Ovary (tissue), 10 donors: ENCODE measurements at regions of chr1 and their contacts with region 1.

Region 1: DNA sequence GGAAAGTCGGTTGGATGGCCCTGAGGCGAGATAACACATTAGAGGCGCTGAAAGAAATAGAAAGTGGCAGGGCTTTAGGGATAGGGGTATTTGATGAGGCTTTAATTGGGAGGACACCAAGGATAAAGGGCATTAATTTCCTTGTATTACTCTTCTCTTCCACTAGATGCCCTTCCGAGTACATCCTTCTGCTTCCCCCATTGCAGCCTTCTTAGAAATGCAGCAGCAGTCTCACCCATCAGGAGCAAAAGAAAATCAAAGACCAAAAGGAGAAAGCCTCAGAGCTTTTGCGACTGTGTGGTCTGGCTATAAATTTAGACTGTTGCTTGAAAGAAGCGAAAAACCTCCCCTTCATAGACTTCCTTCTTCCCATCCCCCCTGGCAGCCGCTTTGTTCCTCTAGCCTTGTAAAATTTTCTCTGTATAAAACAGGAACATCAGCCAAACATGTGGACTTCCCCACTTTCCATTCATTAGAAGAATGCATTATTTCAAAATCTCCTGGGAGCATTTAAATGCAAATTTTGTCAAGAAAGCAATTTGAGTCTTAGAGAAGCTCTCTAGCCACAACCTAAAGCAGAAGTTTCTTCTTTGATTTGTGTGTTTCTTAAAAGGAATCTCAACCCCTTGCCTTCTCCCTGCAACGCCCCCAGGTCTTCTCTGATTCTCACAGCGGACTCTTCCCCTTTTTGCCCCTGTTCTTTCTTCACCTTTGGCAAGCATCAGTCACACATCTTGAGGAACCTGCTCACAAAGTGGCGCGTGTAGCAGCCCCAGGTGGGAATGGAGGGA is 76.6 kb downstream of the NDUFS5 start:
- DNase-seq: peak in 2 of 5 donors; percentile 27 to 49
- H3K4me3 ChIP-seq: no peak overlapping the region
- H3K27ac ChIP-seq: no peak overlapping the region
- H3K4me1 ChIP-seq: peaks cover 9% of the 10 kb centered on the region
- H3K27me3 ChIP-seq: no peaks in the 10 kb centered on the region
- CTCF ChIP-seq: peak; percentile 53 to 91 (median 89)
- EP300 ChIP-seq: no peak
- POLR2A ChIP-seq: no peak

Region 2: DNA sequence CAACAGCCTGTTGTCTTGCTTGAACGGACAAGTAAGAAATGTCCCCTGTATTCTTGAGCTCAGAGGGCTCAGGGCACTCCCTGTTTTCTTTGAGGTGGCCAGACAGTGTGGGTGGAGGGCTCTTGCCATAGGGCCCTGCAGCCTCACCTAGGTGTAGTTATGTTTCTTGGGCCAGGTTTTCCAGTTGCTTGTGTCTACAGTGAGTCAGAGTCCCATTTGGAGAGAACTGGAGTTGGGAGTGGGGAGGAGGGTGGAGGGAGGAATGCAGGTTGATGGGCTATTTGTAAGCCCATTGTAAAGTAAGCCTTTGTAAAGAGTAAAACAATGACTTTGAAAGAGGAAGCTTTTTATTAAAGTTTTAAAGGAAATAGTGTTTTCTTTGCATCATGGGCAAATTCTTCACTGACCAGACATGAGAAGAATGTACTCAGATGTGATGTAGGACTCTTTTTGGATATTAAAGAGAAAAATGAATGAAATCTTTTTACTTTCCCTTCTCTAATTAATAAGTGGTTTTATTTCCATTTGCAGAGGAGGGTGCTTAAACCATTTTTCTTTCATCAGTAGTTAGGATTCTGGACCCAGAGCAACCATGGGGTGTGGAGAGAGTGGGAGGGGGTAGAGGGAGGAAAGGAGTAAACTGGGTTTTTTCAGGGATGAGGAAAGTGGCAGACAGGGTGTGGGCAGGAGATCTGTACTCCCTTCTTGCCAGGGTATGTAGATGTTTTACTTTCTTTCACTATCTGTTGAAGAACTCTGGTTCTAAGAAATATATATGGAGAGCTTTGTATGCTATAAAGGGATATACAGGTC is 56.7 kb after region 1 on chr1:
- intact Hi-C with region 1: loop called in 1 of 4 experiments (anchors 10 kb)
- DNase-seq: no peak
- H3K4me3 ChIP-seq: no peak overlapping the region
- H3K27ac ChIP-seq: no peak overlapping the region
- H3K4me1 ChIP-seq: peaks cover 23% of the 10 kb centered on the region
- H3K27me3 ChIP-seq: no peaks in the 10 kb centered on the region
- CTCF ChIP-seq: no peak
- EP300 ChIP-seq: no peak
- POLR2A ChIP-seq: no peak

Region 3: GRCh38 chr1:39196244-39197215 is 93.8 kb after region 1 on chr1:
- intact Hi-C with region 1: loop called (anchors 5 to 10 kb)
- DNase-seq: no peak
- H3K4me3 ChIP-seq: no peak overlapping the region
- H3K27ac ChIP-seq: no peak overlapping the region
- H3K4me1 ChIP-seq: peaks cover 4% of the 10 kb centered on the region
- H3K27me3 ChIP-seq: no peaks in the 10 kb centered on the region
- CTCF ChIP-seq: no peak
- EP300 ChIP-seq: no peak
- POLR2A ChIP-seq: no peak

Region 4: GRCh38 chr1:39258146-39258924 is 155.6 kb after region 1 on chr1:
- intact Hi-C with region 1: loop called (anchors 2 to 5 kb)
- DNase-seq: peak; percentile 65 to 83 (median 73)
- H3K4me3 ChIP-seq: no peak overlapping the region
- H3K27ac ChIP-seq: peak overlapping the region in 1 of 2 donors; percentile 29
- H3K4me1 ChIP-seq: peaks cover 15% of the 10 kb centered on the region
- H3K27me3 ChIP-seq: no peaks in the 10 kb centered on the region
- CTCF ChIP-seq: peak; percentile 49 to 88 (median 82)
- EP300 ChIP-seq: no peak
- POLR2A ChIP-seq: no peak

Region 5: DNA sequence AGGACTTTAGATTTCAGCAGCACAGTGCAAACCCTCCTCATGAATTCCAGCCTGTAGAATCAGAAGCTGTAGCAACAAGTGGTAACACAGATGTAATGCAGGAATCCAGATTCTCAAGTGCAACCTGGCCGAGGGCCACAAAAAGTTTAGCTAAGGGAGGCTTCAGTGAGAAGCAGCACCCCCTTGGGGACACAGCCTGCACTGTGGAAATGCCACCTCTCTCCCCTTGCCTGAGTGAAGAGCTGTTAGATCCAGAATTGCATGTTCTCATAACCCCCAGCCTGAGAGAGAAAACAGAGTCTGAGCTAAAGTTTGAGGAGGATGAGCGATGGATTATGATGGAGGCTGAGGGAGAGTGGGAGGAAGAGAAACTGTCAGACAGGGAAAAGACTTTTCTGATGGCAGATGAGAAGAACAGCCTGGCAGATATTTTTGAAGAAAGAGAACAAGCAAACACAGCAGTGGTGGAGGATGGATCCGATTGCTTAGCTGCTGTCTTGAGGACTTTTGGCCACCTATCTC is 308.2 kb after region 1 on chr1:
- intact Hi-C with region 1: loop called in 1 of 4 experiments (anchors 10 kb)
- DNase-seq: peak; percentile 66 to 85 (median 80)
- H3K4me3 ChIP-seq: no peak overlapping the region
- H3K27ac ChIP-seq: no peak overlapping the region
- H3K4me1 ChIP-seq: peaks cover 28% of the 10 kb centered on the region
- H3K27me3 ChIP-seq: no peaks in the 10 kb centered on the region
- CTCF ChIP-seq: peak in 2 of 3 donors; percentile 62 to 64
- EP300 ChIP-seq: no peak
- POLR2A ChIP-seq: no peak